Mammary epithelial cell (primary cell): ENCODE measurements at regions of chr2 and their contacts with region 1.

Region 1: GRCh38 chr2:166539340-166540162 is 45.5 kb upstream of the SCN7A start:
- DNase-seq: peak; percentile 43
- H3K4me3 ChIP-seq: no peak overlapping the region
- H3K27ac ChIP-seq: no peak overlapping the region
- H3K4me1 ChIP-seq: peaks cover 2% of the 10 kb centered on the region
- H3K27me3 ChIP-seq: no peaks in the 10 kb centered on the region
- CTCF ChIP-seq: peak; percentile 81 to 83

Region 2: DNA sequence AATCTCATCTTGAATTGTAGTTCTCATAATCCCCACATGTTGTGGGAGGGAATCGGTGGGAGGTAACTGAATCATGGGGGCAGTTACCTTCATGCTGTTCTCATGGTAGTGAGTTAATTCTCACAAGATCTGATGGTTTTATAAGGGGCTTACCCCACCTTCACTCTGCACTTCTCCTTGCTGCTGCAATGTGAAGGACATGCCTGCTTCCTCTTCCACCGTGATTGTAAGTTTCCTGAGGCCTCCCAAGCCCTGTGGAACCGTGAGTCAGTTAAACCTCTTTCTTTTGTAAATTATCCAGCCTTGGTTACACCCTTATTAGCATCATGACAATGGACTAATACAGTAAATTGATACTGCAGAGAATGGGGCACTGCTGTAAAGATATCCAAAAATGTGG is 103.4 kb before region 1 on chr2:
- CTCF ChIA-PET with region 1: no interaction called
- dilution Hi-C with region 1: no loop called
- in situ Hi-C with region 1: no loop called
- intact Hi-C with region 1: no loop called
- DNase-seq: no peak
- H3K4me3 ChIP-seq: no peak overlapping the region
- H3K27ac ChIP-seq: no peak overlapping the region
- H3K4me1 ChIP-seq: no peaks in the 10 kb centered on the region
- H3K27me3 ChIP-seq: peaks cover 3% of the 10 kb centered on the region
- CTCF ChIP-seq: no peak

Region 3: GRCh38 chr2:166573391-166573790 is 33.8 kb after region 1 on chr2:
- CTCF ChIA-PET with region 1: interaction called, 12 read pairs
- dilution Hi-C with region 1: no loop called
- in situ Hi-C with region 1: no loop called
- intact Hi-C with region 1: no loop called
- DNase-seq: no peak
- H3K4me3 ChIP-seq: no peak overlapping the region
- H3K27ac ChIP-seq: no peak overlapping the region
- H3K4me1 ChIP-seq: no peaks in the 10 kb centered on the region
- H3K27me3 ChIP-seq: no peaks in the 10 kb centered on the region
- CTCF ChIP-seq: no peak

Region 4: DNA sequence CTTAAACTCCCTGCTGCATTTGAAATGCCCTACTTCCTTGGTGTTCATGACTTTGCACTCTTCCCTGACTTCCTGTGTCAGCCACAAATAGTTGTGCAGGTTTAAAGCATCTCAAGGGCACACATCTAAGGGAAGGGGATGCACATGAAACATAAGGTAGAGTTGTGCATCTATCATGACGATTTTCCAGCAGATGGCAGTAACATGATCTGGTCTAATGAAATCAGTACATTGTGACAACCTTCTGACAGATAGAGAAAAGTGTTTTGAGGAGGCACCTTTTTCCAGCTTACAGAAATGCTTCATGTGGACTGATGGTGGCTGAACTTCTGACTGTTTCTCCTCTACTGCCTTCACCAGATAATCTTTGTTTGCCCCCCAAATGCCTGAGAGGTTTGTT is 587.6 kb after region 1 on chr2:
- CTCF ChIA-PET with region 1: no interaction called
- dilution Hi-C with region 1: no loop called
- in situ Hi-C with region 1: no loop called
- intact Hi-C with region 1: loop called (anchors 5 kb)
- DNase-seq: peak; percentile 30
- H3K4me3 ChIP-seq: no peak overlapping the region
- H3K27ac ChIP-seq: no peak overlapping the region
- H3K4me1 ChIP-seq: no peaks in the 10 kb centered on the region
- H3K27me3 ChIP-seq: no peaks in the 10 kb centered on the region
- CTCF ChIP-seq: peak; percentile 36 to 49

Region 5: GRCh38 chr2:167212014-167212648 is 672.6 kb after region 1 on chr2:
- CTCF ChIA-PET with region 1: no interaction called
- dilution Hi-C with region 1: no loop called
- in situ Hi-C with region 1: loop called (anchors 25 kb)
- intact Hi-C with region 1: no loop called
- DNase-seq: peak; percentile 32
- H3K4me3 ChIP-seq: no peak overlapping the region
- H3K27ac ChIP-seq: no peak overlapping the region
- H3K4me1 ChIP-seq: no peaks in the 10 kb centered on the region
- H3K27me3 ChIP-seq: no peaks in the 10 kb centered on the region
- CTCF ChIP-seq: peak; percentile 77 to 80

Region 6: GRCh38 chr2:167550448-167550847 is 1010.9 kb after region 1 on chr2:
- CTCF ChIA-PET with region 1: no interaction called
- dilution Hi-C with region 1: no loop called
- in situ Hi-C with region 1: no loop called
- intact Hi-C with region 1: loop called (anchors 1 kb)
- DNase-seq: no peak
- H3K4me3 ChIP-seq: no peak overlapping the region
- H3K27ac ChIP-seq: no peak overlapping the region
- H3K4me1 ChIP-seq: no peaks in the 10 kb centered on the region
- H3K27me3 ChIP-seq: no peaks in the 10 kb centered on the region
- CTCF ChIP-seq: peak; percentile 27 to 35

Region 7: GRCh38 chr2:168118733-168119514 is 1579.4 kb after region 1 on chr2:
- CTCF ChIA-PET with region 1: no interaction called
- dilution Hi-C with region 1: no loop called
- in situ Hi-C with region 1: loop called (anchors 25 kb)
- intact Hi-C with region 1: loop called (anchors 1 kb)
- DNase-seq: peak; percentile 41
- H3K4me3 ChIP-seq: no peak overlapping the region
- H3K27ac ChIP-seq: no peak overlapping the region
- H3K4me1 ChIP-seq: no peaks in the 10 kb centered on the region
- H3K27me3 ChIP-seq: no peaks in the 10 kb centered on the region
- CTCF ChIP-seq: peak; percentile 40 to 69